GM10248 (cell line): ENCODE measurements at regions of chr10 and their contacts with region 1.

Region 1: DNA sequence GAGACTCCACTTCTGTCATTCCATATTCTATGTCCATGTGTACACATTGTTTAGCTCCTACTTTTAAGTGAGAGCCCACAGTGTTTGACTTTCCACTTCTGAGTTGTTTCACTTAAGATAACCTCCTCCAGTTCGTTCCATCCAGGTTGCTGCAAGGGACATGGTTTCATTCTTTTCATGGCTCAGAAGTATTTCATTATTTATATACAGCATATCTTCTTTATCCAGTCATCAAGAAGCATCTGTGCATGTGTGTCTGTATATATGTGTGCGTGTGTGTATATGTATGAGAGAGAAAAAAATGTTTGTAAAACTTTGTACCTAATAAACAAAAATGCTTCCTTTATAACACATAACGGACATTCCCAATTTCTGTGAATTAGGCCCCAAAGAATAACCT is 6.2 kb downstream of the SEC61A2 start:
- DNase-seq: no peak
- CTCF ChIP-seq: no peak

Region 2: GRCh38 chr10:12150154-12150553 is 14.5 kb after region 1 on chr10:
- CTCF ChIA-PET with region 1: interaction called, 11 read pairs
- POLR2A ChIA-PET with region 1: no interaction called
- DNase-seq: no peak
- CTCF ChIP-seq: no peak